Cardiac septum (tissue), 1 donor: ENCODE measurements at regions of chr15 and their contacts with region 1.

Region 1: DNA sequence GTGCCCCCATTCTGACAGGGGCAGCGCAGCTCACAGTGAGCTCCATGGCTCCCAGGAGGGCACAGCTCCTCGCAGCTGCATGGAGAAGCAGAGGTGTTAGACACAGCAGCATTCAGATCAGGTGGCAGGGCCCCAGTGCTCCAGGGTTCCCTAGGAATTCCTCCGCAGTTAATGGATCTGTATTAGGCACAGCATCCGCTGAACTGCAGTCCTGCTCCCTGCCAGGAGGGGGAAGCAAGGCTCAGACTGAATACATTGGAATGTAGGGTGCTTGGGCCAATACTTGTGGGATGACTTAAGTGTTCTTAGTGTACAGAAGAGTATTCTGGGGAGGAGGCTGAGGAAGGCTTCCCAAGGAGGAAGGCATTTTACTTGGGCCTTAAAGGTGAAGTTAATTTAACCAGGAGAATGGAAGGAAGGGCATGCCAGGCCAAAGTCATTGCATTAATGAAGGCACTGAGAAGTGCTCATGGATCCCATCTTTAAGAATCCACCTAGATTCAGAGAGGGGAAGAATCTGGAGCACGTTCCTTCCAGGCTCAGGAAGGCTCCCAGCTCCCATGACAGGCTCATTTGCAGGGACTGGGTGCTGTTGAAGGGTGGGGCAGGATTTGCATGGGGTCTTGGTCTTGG is 111.6 kb downstream of the RAB11A start:
- DNase-seq: no peak

Region 2: DNA sequence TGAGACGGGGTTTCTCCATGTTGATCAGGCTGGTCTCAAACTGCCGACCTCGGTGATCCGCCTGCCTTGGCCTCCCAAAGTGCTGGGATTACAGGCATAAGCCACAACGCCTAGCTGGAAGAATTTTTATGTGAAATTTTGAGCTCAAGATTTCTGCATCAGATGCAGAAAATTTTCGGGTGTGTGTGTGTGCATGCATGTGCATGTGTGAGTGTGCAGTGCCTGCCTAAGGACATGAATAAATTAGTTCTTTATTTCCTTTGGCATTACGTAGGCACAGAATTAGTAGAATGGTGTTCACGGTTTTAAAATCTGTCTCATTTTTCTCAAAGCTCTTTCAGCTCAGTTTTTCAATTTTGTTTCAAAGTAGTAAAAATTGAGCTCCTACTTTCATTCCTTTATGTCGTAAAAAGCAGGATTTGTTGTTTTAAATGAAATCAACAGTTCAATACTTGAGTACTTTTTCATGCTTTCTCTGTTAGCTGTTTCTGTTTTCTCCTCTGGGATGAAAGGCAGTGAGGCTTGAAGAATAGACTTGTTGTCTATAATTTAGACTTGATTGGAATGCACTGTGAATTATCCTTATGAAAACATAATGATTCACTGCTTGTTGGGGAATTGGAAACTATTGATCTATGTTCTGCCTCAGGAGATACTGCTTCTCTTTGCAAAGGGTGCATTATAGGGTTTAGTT is 135.0 kb before region 1 on chr15:
- intact Hi-C with region 1: no loop called
- DNase-seq: no peak

Region 3: DNA sequence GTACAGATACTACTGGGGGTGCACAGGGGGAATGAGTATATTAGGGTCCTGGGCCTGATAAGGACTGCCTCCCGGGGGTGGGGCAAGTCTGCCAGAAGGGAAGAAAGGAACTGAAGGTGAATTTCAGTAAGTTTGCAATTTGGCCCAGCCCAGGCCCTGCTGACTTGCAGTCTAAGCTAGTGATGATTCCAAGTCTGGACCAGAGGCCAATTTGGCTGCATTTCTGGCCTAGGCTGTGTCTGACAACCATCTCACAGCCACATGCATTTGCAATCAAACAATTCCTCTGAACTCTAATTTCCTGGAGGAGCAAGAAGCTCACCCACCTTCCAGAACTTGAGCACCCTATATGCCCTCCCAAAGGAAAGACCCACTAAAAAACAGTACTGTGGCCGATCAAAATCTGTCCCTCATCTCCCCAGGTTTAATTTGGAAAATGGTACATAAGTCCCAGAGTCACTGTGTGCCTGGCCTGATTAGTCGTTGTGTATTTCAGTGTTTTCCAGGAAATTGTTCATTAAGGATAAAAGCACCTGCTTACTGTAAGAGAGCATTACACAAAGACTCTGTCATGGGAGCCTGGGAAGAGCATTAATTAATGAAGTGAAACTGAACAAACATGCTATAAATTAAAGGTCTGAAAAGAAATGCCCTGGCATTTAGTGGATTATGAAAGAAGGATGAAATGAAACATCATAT is 158.1 kb after region 1 on chr15:
- intact Hi-C with region 1: loop called (anchors 10 kb)
- DNase-seq: no peak

Region 4: GRCh38 chr15:66287461-66288057 is 306.6 kb after region 1 on chr15:
- intact Hi-C with region 1: loop called (anchors 5 kb)
- DNase-seq: no peak

Region 5: GRCh38 chr15:66356345-66357236 is 375.7 kb after region 1 on chr15 and contains the start of gene TIPIN:
- intact Hi-C with region 1: no loop called
- DNase-seq: peak; percentile 96
- total RNA-seq, gene TIPIN: 4.3 TPM